ENCODE measurements at regions of chr12 and their contacts with region 1.

Region 1: DNA sequence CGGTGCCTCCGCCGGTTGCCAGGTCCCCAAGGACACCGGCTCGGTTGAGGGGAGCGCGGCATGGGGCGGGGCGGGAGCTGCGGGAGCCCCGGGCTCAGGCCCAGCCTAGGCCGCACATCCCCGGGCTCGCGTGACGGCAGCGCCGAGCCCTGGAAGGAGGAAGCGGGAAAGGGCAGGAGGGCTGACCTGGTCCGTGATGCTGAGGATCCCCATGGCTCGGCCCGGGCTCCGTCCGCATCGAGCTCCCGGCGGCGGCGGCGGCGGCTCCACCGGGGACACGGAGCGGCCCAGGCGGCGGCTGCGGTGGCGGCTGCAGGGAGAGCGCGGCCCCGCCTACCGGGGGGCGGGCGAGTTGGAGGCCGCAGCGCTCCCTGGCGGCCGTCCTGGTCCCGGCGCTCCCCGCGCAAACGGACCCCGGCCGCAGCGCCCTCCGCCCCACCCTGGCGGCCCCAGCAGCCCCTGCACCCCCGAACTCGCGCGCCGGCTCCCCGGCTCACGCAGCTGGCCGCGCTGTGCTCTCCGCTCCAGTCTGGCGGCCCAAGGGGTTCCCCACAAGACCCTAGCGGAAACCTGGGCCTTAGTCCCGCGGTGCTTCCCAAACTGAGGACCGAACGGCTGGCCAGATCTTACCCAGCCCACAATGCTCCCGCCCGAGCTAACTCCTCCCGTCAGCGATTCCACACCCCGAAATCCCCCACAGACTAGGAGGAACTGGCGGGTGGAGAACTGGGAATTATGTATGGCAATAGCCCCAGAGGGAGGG is at the start of gene ANKRD52:
- DNase-seq: peak; percentile 80
- H3K4me3 Mint-ChIP-seq: peak within 1 kb of the TSS; percentile 91
- H3K27ac Mint-ChIP-seq: peak within 1 kb of the TSS; percentile 76
- H3K4me1 Mint-ChIP-seq: peaks cover 22% of the 10 kb centered on the region
- H3K27me3 Mint-ChIP-seq: no peaks in the 10 kb centered on the region
- total RNA-seq, gene ANKRD52: 46.4 to 50.1 TPM

Region 2: DNA sequence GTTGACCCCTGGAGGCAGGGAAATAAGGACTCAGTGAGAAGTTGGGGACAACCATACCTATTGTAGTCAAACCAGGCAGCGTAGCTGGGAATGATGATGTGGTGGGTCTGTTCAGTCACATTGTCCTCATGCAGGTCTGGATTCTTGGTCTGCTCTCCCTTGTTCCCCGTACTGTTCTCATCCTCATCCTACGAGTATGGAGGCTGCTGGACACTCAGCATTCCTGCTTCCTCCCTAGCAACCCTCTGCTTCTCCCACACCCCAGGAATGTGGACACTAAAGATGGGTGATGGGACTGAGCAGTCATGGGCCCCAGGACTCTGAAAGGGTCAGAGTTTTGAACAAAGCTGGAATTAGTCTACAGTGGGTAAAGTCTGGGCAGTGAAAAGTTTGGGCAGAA is 79.9 kb before region 1 on chr12:
- CTCF ChIA-PET with region 1: no interaction called
- POLR2A ChIA-PET with region 1: no interaction called
- DNase-seq: no peak
- H3K4me3 Mint-ChIP-seq: no peak overlapping the region
- H3K27ac Mint-ChIP-seq: no peak overlapping the region
- H3K4me1 Mint-ChIP-seq: peaks cover 1% of the 10 kb centered on the region
- H3K27me3 Mint-ChIP-seq: no peaks in the 10 kb centered on the region

Region 3: DNA sequence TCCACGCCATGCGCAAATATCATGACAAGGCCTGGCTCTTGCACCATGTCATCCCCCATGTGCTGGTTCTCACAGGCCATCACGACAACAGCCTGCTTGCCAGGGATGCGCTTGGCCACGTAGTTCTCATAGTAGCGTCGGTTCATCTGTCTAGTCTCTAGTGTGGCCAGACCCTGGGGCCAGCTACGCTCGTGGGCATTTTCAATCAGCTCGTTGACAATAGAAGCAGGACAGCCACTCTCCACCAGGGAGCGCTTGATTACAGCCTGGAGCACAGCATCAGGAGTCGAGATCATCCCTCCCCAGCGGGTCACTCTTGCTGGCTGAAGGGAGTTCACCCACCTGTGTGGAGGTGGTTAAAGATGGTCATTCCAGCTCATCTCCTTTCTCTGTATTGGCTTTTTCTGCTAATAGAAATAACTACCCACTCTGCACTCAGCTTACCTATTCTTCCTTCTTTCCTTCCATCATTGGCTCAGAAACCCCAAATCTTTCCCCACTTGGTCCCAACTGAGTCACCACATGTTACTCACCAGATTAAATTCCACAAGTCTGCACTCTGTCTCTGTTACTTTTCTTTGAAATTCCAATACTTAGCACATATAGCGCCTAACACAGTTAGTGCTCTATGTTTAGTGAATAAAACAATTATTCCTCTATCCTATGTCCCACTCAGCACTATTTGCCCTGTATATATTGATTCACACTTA is 51.6 kb before region 1 on chr12:
- CTCF ChIA-PET with region 1: interaction called, 14 read pairs
- POLR2A ChIA-PET with region 1: interaction called, 3 read pairs
- DNase-seq: peak; percentile 52
- H3K4me3 Mint-ChIP-seq: no peak overlapping the region
- H3K27ac Mint-ChIP-seq: no peak overlapping the region
- H3K4me1 Mint-ChIP-seq: no peaks in the 10 kb centered on the region
- H3K27me3 Mint-ChIP-seq: no peaks in the 10 kb centered on the region